Right ventricle myocardium inferior (tissue), 1 donor: ENCODE measurements at regions of chr11 and their contacts with region 1.

Region 1: GRCh38 chr11:125345421-125346178 is 150.5 kb downstream of the FEZ1 start:
- DNase-seq: peak; percentile 86
- ATAC-seq: peak; percentile 90

Region 2: DNA sequence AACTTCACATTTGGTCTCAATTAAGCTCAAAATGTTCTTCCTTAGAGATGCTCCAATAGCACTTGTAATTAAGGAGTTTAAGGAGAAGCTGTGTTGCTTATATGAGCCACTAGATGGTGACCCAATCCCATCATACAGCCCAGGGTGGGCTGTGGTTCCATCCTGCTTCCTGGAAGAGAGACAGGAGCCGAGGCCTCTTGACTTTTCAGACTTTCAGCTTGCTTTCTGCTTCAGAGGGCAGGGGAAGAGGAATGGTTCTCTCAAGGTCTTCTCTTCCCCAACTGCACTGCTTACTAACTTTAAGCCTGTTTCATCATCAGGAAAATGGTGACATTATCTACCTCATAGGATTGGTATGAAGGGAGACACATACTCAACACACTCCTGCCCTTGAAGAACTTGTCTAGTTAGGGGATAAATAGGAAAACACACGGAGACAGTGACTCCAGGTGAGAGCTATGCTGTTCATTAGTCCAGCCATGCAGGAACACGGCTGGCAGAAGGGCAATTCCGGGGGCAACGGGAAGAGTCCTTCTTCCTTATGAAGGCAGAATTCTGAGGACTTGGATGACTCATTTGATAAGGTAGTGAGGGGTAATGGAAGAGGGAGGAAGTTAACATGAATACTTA is 254.2 kb before region 1 on chr11:
- intact Hi-C with region 1: loop called (anchors 5 kb)
- DNase-seq: no peak
- ATAC-seq: peak; percentile 88

Region 3: GRCh38 chr11:125164422-125165110 is 181.0 kb before region 1 on chr11 and contains the start of gene PKNOX2:
- intact Hi-C with region 1: loop called (anchors 1 kb)
- DNase-seq: peak; percentile 84
- ATAC-seq: peak; percentile 83
- total RNA-seq, gene PKNOX2: 9.1 TPM

Region 4: GRCh38 chr11:125175896-125176575 is 169.6 kb before region 1 on chr11:
- intact Hi-C with region 1: no loop called
- DNase-seq: no peak
- ATAC-seq: no peak

Region 5: GRCh38 chr11:125263268-125263790 is 82.3 kb before region 1 on chr11:
- intact Hi-C with region 1: loop called (anchors 5 kb)
- DNase-seq: peak; percentile 88
- ATAC-seq: peak; percentile 91

Region 6: GRCh38 chr11:125390946-125391345 is 45.3 kb after region 1 on chr11:
- intact Hi-C with region 1: loop called (anchors 5 kb)
- DNase-seq: no peak
- ATAC-seq: no peak